Activated CD4-positive, alpha-beta memory T cell treated with anti-CD3 and anti-CD28 coated beads, Interleukin-2, amount 10 ng/mL, durations not matched to agents 7 days and 5 days (primary cell): ENCODE measurements at regions of chr5 and their contacts with region 1.

Region 1: GRCh38 chr5:88729084-88729828 is 153.7 kb downstream of the MEF2C start:
- DNase-seq: peak; percentile 61
- H3K4me3 Mint-ChIP-seq: no peak overlapping the region
- H3K27ac Mint-ChIP-seq: no peak overlapping the region
- H3K4me1 Mint-ChIP-seq: no peaks in the 10 kb centered on the region
- H3K27me3 Mint-ChIP-seq: peaks cover 17% of the 10 kb centered on the region

Region 2: DNA sequence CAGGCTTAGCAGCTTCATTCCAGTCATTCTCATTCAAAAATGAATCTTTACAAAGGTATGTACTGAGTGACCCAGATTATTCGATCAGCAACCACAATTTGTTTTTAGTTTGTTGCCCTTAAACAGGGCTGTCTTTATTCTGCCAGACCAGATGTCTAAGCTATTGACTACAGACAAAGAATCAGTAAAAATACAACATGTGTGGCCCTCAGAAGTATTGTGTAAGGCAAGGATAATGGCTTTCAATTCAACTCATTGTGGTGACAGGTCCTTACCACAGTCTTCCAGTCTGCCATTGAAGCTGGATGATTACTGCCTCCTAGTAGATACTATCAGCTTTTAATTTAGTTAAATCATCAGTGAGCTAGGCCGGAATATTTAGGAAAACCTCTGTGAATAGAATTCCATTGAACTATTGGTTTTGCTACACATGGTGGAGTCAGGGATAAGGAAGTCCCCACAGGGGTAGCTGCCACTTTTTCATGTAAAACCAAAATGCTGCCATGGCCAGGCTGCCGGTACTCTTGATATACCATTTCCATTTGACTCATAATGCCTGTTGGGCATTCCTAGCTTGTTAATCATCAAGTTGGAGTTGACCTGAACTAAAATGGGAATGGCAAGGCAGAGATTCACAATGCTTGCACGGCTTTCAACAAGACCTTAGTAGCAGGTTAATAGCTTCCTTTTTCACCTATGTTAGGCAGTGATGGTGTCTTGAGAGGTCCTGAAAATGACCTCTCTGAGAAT is 21.9 kb before region 1 on chr5:
- CTCF ChIA-PET with region 1: interaction called, 15 read pairs
- POLR2A ChIA-PET with region 1: no interaction called
- DNase-seq: no peak
- H3K4me3 Mint-ChIP-seq: no peak overlapping the region
- H3K27ac Mint-ChIP-seq: no peak overlapping the region
- H3K4me1 Mint-ChIP-seq: no peaks in the 10 kb centered on the region
- H3K27me3 Mint-ChIP-seq: peaks cover 5% of the 10 kb centered on the region

Region 3: DNA sequence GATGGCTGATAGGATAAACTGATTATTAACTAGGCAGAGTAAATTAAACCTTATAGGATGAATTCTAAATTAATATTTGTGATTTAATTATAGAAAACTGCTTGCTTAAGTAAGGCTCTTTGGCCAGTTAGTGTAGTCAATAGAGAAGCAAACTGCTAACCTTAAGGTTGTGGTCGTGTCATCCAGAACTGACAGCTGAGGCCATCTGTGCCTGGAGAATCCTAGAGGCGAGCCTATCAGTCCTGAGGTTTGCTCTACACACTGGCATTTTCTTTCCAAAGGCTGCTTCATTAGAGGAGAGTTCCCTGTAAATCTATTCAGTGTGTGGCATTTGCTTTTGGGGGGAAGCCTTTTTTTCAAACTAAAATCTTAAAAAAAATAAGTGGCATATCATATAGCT is 15.4 kb before region 1 on chr5:
- CTCF ChIA-PET with region 1: interaction called, 15 read pairs
- POLR2A ChIA-PET with region 1: no interaction called
- DNase-seq: no peak
- H3K4me3 Mint-ChIP-seq: no peak overlapping the region
- H3K27ac Mint-ChIP-seq: no peak overlapping the region
- H3K4me1 Mint-ChIP-seq: no peaks in the 10 kb centered on the region
- H3K27me3 Mint-ChIP-seq: peaks cover 12% of the 10 kb centered on the region

Region 4: DNA sequence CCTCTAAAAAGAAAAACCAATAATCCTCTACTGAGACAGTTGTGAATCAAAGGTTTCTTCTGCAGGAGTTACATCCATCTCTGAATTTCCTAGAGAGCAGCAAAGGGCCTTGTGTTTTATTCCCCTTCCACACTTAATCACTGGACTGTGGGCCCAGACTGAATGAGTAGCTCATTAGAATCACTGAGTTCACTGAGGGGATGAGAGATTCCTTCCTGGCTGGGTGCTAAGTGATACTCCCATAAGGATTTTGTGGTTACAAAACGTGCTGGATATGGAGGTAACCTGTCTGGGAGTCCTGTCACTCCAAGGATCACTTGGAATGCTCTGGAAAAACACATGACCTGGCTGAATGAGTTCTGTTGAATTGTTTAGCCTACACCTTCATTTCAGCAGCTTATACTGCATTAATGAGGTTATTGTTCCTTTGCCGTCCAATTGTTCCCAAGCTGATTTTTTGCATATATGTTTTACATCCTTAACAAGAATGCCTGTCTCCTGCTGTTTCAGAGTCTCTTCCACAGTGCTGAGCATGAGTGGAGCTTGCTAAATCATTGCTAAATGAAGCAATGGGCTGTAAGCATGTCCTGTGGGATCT is 70.8 kb after region 1 on chr5:
- CTCF ChIA-PET with region 1: no interaction called
- POLR2A ChIA-PET with region 1: no interaction called
- DNase-seq: no peak
- H3K4me3 Mint-ChIP-seq: no peak overlapping the region
- H3K27ac Mint-ChIP-seq: no peak overlapping the region
- H3K4me1 Mint-ChIP-seq: no peaks in the 10 kb centered on the region
- H3K27me3 Mint-ChIP-seq: no peaks in the 10 kb centered on the region

Region 5: GRCh38 chr5:90264689-90265544 is 1535.7 kb after region 1 on chr5:
- CTCF ChIA-PET with region 1: interaction called, 42 read pairs
- POLR2A ChIA-PET with region 1: no interaction called
- DNase-seq: peak; percentile 45
- H3K4me3 Mint-ChIP-seq: no peak overlapping the region
- H3K27ac Mint-ChIP-seq: no peak overlapping the region
- H3K4me1 Mint-ChIP-seq: no peaks in the 10 kb centered on the region
- H3K27me3 Mint-ChIP-seq: no peaks in the 10 kb centered on the region